ENCODE measurements at regions of chr19 and their contacts with region 1.

Region 1: DNA sequence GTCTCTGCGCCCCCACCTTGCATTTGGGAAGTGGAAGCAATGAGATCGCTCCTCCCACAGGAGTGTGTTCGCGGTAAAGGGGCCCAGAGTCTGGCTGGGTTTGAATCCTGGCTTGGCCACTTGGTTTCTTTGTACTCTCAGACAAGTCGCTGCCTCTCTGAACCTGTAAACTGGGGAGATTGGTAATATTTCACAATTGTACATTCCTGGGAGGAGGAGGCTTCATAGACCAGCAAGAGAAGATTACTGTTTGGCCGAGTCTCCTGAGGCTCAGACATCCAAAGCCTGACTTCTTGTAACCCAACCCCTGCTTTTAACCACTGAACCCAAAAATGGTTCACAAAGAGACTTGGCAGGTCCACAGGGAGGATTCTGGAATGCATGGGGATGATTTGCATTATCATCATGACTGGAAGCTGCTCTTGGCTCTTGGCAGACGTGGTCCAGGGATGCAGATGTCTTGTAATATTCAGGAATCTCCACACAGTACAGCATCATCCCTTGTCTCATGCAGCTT is 13.6 kb upstream of the STRN4 start:
- DNase-seq: peak in 1 of 5 donors; percentile 64
- H3K4me3 ChIP-seq: no peak overlapping the region
- H3K27ac ChIP-seq: no peak overlapping the region
- H3K4me1 ChIP-seq: peaks cover 3% of the 10 kb centered on the region
- H3K27me3 ChIP-seq: no peaks in the 10 kb centered on the region
- CTCF ChIP-seq: no peak
- EP300 ChIP-seq: no peak
- POLR2A ChIP-seq: no peak

Region 2: DNA sequence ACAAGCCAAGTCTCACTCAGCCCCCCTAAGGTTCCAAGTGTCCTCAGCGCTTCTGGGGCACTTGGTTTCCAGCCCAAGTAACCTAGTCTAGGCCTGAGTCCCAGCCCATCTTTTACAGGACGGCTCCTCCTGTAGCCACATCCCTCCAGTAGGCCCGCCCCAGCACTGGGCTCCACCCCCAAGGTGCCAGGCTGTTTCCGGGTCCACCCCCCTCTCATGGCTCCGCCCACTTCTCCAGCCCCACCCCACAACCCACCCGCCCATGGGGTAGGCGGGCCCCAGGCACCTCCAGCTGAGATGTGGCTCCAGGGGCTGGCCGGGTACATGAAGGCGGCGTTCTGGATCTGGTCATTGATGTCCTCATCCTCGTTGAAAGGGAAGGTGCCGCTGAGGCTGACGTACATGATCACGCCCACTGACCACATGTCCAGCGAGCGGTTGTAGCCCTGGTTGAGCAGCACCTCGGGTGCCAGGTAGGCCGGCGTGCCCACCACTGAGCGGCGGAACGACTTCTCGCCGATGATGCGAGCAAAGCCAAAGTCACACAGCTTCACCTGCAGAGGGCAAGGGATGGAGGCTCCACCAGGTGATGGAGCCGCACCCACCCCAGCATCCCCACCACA is 81.7 kb before region 1 on chr19:
- intact Hi-C with region 1: no loop called
- DNase-seq: no peak
- H3K4me3 ChIP-seq: no peak overlapping the region
- H3K27ac ChIP-seq: no peak overlapping the region
- H3K4me1 ChIP-seq: peaks cover 2% of the 10 kb centered on the region
- H3K27me3 ChIP-seq: no peaks in the 10 kb centered on the region
- CTCF ChIP-seq: no peak
- EP300 ChIP-seq: no peak
- POLR2A ChIP-seq: no peak

Region 3: GRCh38 chr19:46840136-46840942 is 80.5 kb after region 1 on chr19:
- intact Hi-C with region 1: loop called (anchors 2 to 5 kb)
- DNase-seq: peak; percentile 51 to 77 (median 67)
- H3K4me3 ChIP-seq: no peak overlapping the region
- H3K27ac ChIP-seq: no peak overlapping the region
- H3K4me1 ChIP-seq: no peaks in the 10 kb centered on the region
- H3K27me3 ChIP-seq: no peaks in the 10 kb centered on the region
- CTCF ChIP-seq: peak; percentile 76 to 89 (median 86)
- EP300 ChIP-seq: no peak
- POLR2A ChIP-seq: no peak